ENCODE measurements at regions of chr15 and their contacts with region 1.

Region 1: GRCh38 chr15:52514482-52514881 is 14.2 kb downstream of the MYO5A start:
- DNase-seq: no peak
- H3K4me3 ChIP-seq: no peak overlapping the region
- H3K27ac ChIP-seq: no peak overlapping the region
- H3K4me1 ChIP-seq: peaks cover 21% of the 10 kb centered on the region
- CTCF ChIP-seq: no peak

Region 2: DNA sequence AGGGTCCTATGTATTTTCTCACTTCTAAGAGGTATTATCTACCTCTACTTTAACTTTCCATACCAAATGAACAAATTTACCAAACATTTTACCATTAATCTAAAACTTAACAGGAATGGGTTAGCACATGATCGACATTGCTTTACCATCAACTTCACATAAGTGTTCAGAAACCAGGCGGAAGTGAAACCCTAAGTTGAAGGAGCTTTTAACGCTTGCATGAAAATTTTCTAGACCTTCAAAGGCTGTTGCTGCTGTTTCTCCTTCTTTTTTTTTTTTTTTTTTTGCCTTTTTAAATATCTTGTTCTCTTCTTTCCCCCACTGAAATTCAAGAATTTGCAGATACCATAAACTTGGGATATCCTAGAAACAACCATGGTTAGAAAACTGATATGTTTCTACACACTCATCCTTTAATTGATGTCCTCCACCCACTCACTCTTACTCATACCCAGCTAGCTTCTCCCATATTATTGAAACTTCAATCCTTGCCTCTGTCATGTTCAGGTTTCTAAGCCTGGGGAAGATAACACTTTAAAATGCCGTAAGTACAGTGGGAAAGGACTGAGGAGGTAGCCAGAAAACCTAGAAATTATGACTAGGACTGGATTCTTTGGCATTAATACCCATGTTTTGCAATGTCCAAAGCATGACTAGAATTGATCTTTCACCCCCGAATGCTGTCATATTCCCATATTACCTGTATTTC is 10.5 kb before region 1 on chr15:
- CTCF ChIA-PET with region 1: no interaction called
- POLR2A ChIA-PET with region 1: interaction called, 11 read pairs
- intact Hi-C with region 1: no loop called
- DNase-seq: peak; percentile 92
- H3K4me3 ChIP-seq: peak overlapping the region; percentile 55
- H3K27ac ChIP-seq: peak overlapping the region; percentile 94
- H3K4me1 ChIP-seq: peaks cover 70% of the 10 kb centered on the region
- CTCF ChIP-seq: no peak